Activated CD4-positive, alpha-beta memory T cell treated with anti-CD3 and anti-CD28 coated beads, Interleukin-2, amount 10 ng/mL, durations not matched to agents 7 days and 5 days (primary cell): ENCODE measurements at regions of chr9 and their contacts with region 1.

Region 1: DNA sequence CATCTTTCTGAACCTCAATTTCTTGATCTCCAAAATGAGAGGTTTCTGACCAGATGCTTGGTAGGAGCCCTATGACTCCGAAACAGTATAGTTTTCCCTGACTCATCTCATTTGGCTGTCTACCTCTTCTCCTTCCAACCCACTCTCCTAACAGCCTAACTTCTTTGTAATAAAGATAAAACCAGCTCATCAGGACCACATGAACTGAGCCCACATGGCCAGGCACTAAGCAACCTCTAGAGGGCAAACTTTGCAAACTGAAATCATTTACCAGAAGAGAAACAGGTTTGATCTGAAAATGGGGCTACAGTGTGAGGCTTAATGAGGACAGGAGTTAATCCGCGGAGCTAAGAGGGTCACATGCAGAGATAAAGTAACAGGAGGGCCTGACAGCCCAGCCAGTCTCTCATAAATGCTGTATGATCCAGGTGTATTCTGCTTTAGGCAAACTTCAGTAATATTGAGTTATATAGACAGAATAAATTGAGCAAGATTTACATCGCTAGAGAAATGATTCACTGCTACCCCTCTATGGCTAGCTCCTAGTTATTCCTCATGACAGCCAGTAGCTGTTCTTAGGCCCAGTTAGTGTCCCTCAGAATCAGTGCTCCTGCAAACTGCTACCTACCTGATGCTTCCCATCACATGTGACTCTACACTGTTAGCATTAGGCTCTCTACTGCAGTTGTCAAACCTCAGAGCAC is 64.6 kb downstream of the ABCA1 start:
- DNase-seq: peak; percentile 43
- H3K4me3 Mint-ChIP-seq: no peak overlapping the region
- H3K27ac Mint-ChIP-seq: no peak overlapping the region
- H3K4me1 Mint-ChIP-seq: no peaks in the 10 kb centered on the region
- H3K27me3 Mint-ChIP-seq: no peaks in the 10 kb centered on the region

Region 2: GRCh38 chr9:104927912-104928740 is 64.8 kb after region 1 on chr9 and contains the start of gene ABCA1:
- CTCF ChIA-PET with region 1: interaction called, 13 read pairs
- POLR2A ChIA-PET with region 1: no interaction called
- DNase-seq: peak; percentile 67
- H3K4me3 Mint-ChIP-seq: peak within 1 kb of the TSS; percentile 80
- H3K27ac Mint-ChIP-seq: no peak within 1 kb of the TSS
- H3K4me1 Mint-ChIP-seq: peaks cover 24% of the 10 kb centered on the region
- H3K27me3 Mint-ChIP-seq: peaks cover 32% of the 10 kb centered on the region
- total RNA-seq, gene ABCA1: 0.93 to 1.6 TPM

Region 3: DNA sequence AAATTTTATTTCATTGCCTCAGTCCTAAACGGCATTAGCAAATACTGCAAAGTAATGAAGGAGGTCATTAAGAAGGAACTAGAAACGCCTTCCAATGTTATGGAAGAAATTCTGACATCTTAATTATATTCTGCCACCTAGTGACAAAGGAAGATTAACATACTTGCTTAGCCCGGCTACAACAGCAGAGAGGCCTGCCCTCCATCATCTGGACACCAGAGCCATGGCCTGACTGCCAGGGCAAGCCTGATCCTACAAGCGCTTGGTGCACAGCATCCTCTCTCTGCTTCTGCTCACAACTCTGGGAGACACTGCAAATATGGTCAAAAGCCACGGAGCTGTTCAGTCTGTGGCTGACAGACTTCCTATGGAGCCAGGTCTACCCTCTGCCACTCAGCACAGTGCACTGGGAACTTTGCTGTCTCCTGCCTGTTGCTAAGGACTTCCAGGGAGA is 293.8 kb after region 1 on chr9:
- CTCF ChIA-PET with region 1: interaction called, 58 read pairs
- POLR2A ChIA-PET with region 1: no interaction called
- DNase-seq: peak; percentile 16
- H3K4me3 Mint-ChIP-seq: no peak overlapping the region
- H3K27ac Mint-ChIP-seq: no peak overlapping the region
- H3K4me1 Mint-ChIP-seq: no peaks in the 10 kb centered on the region
- H3K27me3 Mint-ChIP-seq: no peaks in the 10 kb centered on the region